ENCODE measurements at regions of chr5 and their contacts with region 1.

Region 1: GRCh38 chr5:39217365-39218281 is 1.7 kb downstream of the FYB1 start:
- DNase-seq: peak; percentile 60 to 92
- ATAC-seq: peak; percentile 69 to 87 (median 78)
- H3K4me3 ChIP-seq: no peak overlapping the region
- H3K4me3 Mint-ChIP-seq: peak overlapping the region; percentile 67
- H3K27ac ChIP-seq: peak overlapping the region; percentile 53
- H3K27ac Mint-ChIP-seq: peak overlapping the region; percentile 84 to 96
- H3K4me1 ChIP-seq: peaks cover 45% of the 10 kb centered on the region
- H3K4me1 Mint-ChIP-seq: peaks cover 72 to 78% of the 10 kb centered on the region in 2 donors
- H3K27me3 ChIP-seq: no peaks in the 10 kb centered on the region
- H3K27me3 Mint-ChIP-seq: no peaks in the 10 kb centered on the region
- CTCF ChIP-seq: peak; percentile 96

Region 2: DNA sequence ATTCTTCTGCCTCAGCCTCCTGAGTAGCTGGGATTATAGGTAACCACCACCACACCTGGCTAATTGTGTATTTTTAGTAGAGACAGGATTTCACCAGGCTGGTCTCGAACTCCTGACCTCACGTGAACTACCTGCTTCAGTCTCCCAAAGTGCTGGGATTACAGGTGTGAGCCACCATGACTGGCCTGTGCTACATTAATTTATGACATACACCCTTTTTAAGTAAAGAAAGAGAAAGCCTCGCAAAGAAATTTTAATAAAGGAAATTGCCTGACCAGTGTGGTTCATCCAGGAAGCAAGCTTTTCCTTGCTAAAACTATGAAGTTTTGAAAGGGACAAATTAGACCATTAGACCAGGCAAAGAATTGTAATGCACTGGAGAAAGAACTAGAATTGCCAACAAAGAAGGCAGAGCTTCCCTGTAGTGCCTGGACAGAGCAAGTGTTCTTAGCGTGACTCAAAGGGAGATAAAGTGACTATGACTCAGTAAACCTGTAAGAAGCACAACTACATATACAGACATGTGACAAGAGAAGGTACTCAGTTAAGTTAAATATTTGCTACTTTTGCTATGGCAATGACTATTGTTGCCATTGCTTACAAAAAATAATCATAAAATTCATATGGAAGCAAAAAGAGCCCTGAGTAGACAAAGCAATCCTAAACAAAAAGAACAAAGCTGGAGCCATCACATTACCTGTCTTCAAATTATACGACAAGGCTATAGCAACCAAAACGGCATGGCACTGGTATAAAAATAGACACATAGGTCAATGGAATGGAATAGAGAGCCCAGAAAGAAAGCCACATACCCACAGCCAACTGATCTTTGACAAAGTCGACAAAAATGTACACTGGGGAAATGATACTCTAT is 52.9 kb before region 1 on chr5:
- intact Hi-C with region 1: no loop called
- DNase-seq: peak in 1 of 2 donors; percentile 69
- ATAC-seq: peak; percentile 27 to 63 (median 62)
- H3K4me3 ChIP-seq: no peak overlapping the region
- H3K4me3 Mint-ChIP-seq: peak overlapping the region; percentile 78
- H3K27ac ChIP-seq: peak overlapping the region; percentile 61
- H3K27ac Mint-ChIP-seq: peak overlapping the region; percentile 90 to 91
- H3K4me1 ChIP-seq: peaks cover 23% of the 10 kb centered on the region
- H3K4me1 Mint-ChIP-seq: peaks cover 73 to 82% of the 10 kb centered on the region in 2 donors
- H3K27me3 ChIP-seq: no peaks in the 10 kb centered on the region
- H3K27me3 Mint-ChIP-seq: no peaks in the 10 kb centered on the region
- CTCF ChIP-seq: no peak

Region 3: GRCh38 chr5:39202597-39203274 is 14.9 kb before region 1 on chr5:
- intact Hi-C with region 1: loop called (anchors 2 kb)
- DNase-seq: peak in 1 of 2 donors; percentile 75
- ATAC-seq: peak; percentile 29 to 71 (median 54)
- H3K4me3 ChIP-seq: peak overlapping the region; percentile 49
- H3K4me3 Mint-ChIP-seq: peak overlapping the region; percentile 88
- H3K27ac ChIP-seq: peak overlapping the region; percentile 82
- H3K27ac Mint-ChIP-seq: peak overlapping the region; percentile 96 to 98
- H3K4me1 ChIP-seq: peaks cover 38% of the 10 kb centered on the region
- H3K4me1 Mint-ChIP-seq: peaks cover 82 to 92% of the 10 kb centered on the region in 2 donors
- H3K27me3 ChIP-seq: no peaks in the 10 kb centered on the region
- H3K27me3 Mint-ChIP-seq: no peaks in the 10 kb centered on the region
- CTCF ChIP-seq: no peak

Region 4: GRCh38 chr5:39283231-39283818 is 65.7 kb after region 1 on chr5:
- intact Hi-C with region 1: loop called (anchors 1 kb)
- DNase-seq: peak in 1 of 2 donors; percentile 91
- ATAC-seq: peak; percentile 93 to 100 (median 100)
- H3K4me3 ChIP-seq: no peak overlapping the region
- H3K4me3 Mint-ChIP-seq: no peak overlapping the region
- H3K27ac ChIP-seq: no peak overlapping the region
- H3K27ac Mint-ChIP-seq: peak overlapping the region; percentile 32 to 69
- H3K4me1 ChIP-seq: peaks cover 5% of the 10 kb centered on the region
- H3K4me1 Mint-ChIP-seq: peaks cover 15% of the 10 kb centered on the region in 2 donors
- H3K27me3 ChIP-seq: peaks cover 4% of the 10 kb centered on the region
- H3K27me3 Mint-ChIP-seq: peaks cover 11 to 13% of the 10 kb centered on the region in 2 donors
- CTCF ChIP-seq: peak; percentile 75